GM12878 (cell line): ENCODE measurements at regions of chr13 and their contacts with region 1.

Region 1: DNA sequence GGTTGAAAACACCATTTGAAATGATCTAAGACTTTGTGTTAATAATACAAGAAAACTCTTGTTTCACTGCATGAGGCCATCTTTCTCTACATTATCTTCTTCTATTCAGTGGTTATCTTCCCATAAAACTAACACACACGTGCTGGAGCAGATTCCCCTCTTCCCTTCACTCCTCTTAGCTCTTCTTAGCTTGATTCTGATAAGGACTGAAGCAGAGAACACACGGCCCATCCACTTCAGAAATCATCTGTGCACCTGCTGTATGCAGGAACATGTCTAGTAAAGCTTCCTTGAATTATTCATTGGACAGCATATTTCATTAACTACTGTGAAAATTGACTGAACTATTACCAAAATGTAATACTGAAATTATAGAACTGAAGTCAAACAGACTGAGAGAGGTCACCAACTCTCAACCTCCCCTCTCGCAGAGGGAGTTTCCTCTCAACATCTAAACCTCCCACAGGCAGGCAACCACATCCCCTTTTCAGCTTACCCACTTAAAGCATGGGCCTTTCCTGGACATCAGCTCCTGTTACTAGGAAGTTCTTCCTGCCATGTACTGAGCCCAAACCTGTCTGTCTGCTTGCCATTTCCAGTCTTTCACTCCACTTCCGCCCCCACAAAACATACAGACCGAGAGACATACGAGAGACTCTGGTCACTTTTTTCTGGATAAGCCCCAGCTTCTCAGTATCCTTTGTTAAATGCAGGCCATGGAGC is 113.9 kb downstream of the CRYL1 start:
- DNase-seq: peak; percentile 75
- ATAC-seq: peak; percentile 99
- H3K4me3 ChIP-seq: no peak overlapping the region
- H3K27ac ChIP-seq: peak overlapping the region; percentile 83
- H3K4me1 ChIP-seq: peaks cover 23% of the 10 kb centered on the region
- H3K27me3 ChIP-seq: no peaks in the 10 kb centered on the region
- CTCF ChIP-seq: no peak
- EP300 ChIP-seq: peak; percentile 21 to 51; a peak in 1 of 4 replicates
- POLR2A ChIP-seq: no peak
- RAD21 ChIP-seq: no peak

Region 2: DNA sequence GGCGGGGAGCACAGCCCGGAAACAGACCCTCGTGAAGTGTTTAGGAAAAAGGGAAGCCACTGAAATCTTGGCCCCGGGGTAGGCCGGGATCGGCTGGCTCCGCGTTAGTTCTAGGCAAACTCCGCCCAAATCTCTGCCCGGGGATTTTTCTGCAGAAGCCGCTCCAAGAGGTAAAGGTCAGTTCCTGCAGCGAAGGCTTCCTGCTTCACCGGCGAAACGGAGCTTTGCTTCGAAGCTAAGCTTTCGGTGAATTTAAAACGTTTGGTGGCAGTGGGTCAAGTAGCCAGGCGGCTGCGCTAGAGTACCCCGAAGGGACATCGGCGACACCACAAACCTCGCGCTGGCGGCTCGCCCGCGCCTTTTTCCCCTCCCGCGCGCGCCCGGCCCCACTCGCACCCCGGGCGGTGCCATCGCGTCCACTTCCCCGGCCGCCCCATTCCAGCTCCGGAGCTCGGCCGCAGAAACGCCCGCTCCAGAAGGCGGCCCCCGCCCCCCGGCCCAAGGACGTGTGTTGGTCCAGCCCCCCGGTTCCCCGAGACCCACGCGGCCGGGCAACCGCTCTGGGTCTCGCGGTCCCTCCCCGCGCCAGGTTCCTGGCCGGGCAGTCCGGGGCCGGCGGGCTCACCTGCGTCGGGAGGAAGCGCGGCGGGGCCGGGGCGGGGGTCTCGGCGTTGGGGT is 219.5 kb before region 1 on chr13:
- CTCF ChIA-PET with region 1: interaction called, 4 read pairs
- POLR2A ChIA-PET with region 1: no interaction called
- RAD21 ChIA-PET with region 1: no interaction called
- SMC1A ChIA-PET with region 1: interaction called, 5 read pairs
- in situ Hi-C with region 1: no loop called
- intact Hi-C with region 1: loop called (anchors 5 kb)
- DNase-seq: no peak
- ATAC-seq: no peak; the same call in 2 of the 3 replicates
- H3K4me3 ChIP-seq: peak overlapping the region; percentile 37; the same call in 1 of the 2 replicates
- H3K27ac ChIP-seq: no peak overlapping the region
- H3K4me1 ChIP-seq: peaks cover 12% of the 10 kb centered on the region
- H3K27me3 ChIP-seq: peaks cover 7 to 25% of the 10 kb centered on the region in 2 experiments; a peak in 3 of 4 replicates
- CTCF ChIP-seq: 0 out of 6 replicates have a peak, but pooled peaks of 1 of the 3 experiments have one; percentile 2
- EP300 ChIP-seq: no peak
- POLR2A ChIP-seq: no peak
- RAD21 ChIP-seq: peak; percentile 31; the same call in 1 of the 2 replicates

Region 3: DNA sequence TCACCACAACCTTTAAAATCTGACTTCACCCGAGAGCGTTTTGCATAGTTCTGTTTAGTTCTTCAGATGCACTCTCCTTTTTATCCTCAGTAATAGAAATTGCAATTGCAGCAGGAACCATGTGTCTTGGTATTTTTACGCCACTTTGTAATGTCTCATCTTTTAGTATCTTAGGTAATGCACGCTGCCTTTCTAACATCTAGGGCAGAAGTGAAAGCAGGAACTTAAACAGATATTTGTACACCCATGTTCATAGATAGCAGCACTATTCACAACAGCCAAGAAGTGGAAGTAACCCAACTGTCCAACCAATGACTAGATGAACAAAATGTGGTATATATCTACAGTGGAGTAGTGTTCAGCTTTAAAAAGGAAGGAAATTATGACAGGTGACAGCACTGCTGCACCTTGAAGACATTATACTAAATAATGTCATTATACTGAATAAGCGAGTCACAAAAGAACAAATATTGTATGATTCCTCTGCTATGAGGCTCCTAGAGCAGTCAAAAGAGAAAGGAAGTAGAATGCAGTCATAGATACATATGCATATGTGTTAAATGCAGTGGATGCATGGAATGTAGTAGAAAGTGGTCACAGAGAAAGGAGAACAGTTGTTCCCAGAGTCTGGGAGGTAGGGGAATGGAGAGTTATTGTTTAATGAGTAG is 73.8 kb before region 1 on chr13:
- CTCF ChIA-PET with region 1: no interaction called
- POLR2A ChIA-PET with region 1: no interaction called
- RAD21 ChIA-PET with region 1: no interaction called
- SMC1A ChIA-PET with region 1: no interaction called
- in situ Hi-C with region 1: no loop called
- intact Hi-C with region 1: no loop called
- DNase-seq: peak; percentile 13
- ATAC-seq: peak; percentile 36; the same call in 2 of the 3 replicates
- H3K4me3 ChIP-seq: no peak overlapping the region
- H3K27ac ChIP-seq: no peak overlapping the region
- H3K4me1 ChIP-seq: no peaks in the 10 kb centered on the region; the same call in 1 of the 2 replicates
- H3K27me3 ChIP-seq: no peaks in the 10 kb centered on the region
- CTCF ChIP-seq: no peak
- EP300 ChIP-seq: no peak
- POLR2A ChIP-seq: no peak
- RAD21 ChIP-seq: no peak

Region 4: GRCh38 chr13:20424949-20425348 is 13.2 kb after region 1 on chr13:
- CTCF ChIA-PET with region 1: no interaction called
- POLR2A ChIA-PET with region 1: no interaction called
- RAD21 ChIA-PET with region 1: interaction called, 4 read pairs
- SMC1A ChIA-PET with region 1: interaction called, 11 read pairs
- in situ Hi-C with region 1: no loop called
- intact Hi-C with region 1: no loop called
- DNase-seq: no peak
- ATAC-seq: no peak
- H3K4me3 ChIP-seq: no peak overlapping the region
- H3K27ac ChIP-seq: no peak overlapping the region
- H3K4me1 ChIP-seq: peaks cover 22% of the 10 kb centered on the region
- H3K27me3 ChIP-seq: no peaks in the 10 kb centered on the region
- CTCF ChIP-seq: no peak
- EP300 ChIP-seq: no peak
- POLR2A ChIP-seq: no peak
- RAD21 ChIP-seq: no peak

Region 5: DNA sequence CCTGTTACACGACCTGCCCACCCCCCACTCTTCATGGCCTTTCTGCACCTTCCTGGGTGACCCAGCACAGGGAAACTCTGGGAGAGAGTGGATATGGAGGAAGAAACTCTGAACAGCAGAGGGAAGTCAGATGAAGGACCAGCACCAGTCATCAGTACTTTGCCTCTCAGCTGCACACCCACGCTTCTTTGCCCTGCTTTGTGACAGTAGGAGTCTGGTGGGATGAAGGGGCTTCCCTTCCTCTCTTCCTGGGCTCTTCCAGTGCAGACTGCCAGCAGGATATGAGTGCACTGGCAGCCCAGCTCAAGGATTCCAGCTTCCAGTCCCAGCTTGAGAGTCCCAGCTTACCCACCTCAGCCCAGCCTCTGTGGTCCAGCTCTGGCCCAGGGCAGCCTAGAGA is 44.9 kb after region 1 on chr13:
- CTCF ChIA-PET with region 1: no interaction called
- POLR2A ChIA-PET with region 1: no interaction called
- RAD21 ChIA-PET with region 1: no interaction called
- SMC1A ChIA-PET with region 1: no interaction called
- in situ Hi-C with region 1: no loop called
- intact Hi-C with region 1: no loop called
- DNase-seq: no peak
- ATAC-seq: no peak
- H3K4me3 ChIP-seq: no peak overlapping the region
- H3K27ac ChIP-seq: no peak overlapping the region
- H3K4me1 ChIP-seq: no peaks in the 10 kb centered on the region
- H3K27me3 ChIP-seq: no peaks in the 10 kb centered on the region
- CTCF ChIP-seq: no peak
- EP300 ChIP-seq: no peak
- POLR2A ChIP-seq: no peak
- RAD21 ChIP-seq: no peak